ENCODE measurements at regions of chr7 and their contacts with region 1.

Region 1: DNA sequence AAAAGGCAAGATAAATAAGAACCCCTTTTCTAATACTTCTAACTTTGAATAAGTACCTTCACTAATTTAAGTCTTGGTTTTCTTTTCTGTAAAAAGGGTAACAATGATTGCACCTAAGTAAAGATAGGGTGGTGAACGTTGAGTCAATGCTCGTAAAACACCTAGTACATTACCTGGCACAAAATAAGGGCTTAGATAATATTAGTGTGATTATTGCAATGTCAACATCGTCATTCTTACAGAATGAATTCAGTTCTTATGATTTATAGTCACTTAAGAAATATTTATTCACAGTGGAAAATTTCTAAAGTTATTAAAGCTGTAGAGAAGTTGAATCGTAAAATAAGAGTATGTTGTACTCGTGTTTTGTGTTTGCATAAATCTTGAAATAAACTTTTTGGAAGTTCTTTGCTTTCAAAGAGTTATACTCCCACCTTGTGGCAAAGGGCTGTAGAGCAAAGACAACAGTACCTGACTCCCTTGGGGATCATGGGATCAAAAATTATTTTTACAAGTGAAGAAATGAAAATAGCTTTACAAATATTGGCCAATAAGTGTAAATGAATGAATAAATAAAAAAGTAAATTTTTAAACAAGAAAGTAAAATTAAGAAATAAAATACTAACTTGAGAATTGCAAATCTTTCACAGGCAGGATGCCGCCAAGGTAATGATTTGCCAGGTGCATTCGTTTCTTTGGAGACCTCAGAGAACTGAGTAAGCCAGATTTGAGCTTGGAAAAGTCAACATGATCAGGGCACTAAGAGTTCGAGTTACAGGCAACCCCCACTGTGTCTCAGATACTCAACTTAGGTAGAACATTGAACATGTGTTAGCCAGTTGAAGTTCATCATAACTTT is 285.8 kb upstream of the CACNA2D1 start:
- DNase-seq: peak in 1 of 2 experiments; percentile 40
- H3K4me3 ChIP-seq: no peak overlapping the region
- H3K4me3 Mint-ChIP-seq: no peak overlapping the region
- H3K27ac Mint-ChIP-seq: no peak overlapping the region
- H3K4me1 ChIP-seq: no peaks in the 10 kb centered on the region
- H3K4me1 Mint-ChIP-seq: no peaks in the 10 kb centered on the region
- H3K27me3 ChIP-seq: no peaks in the 10 kb centered on the region
- H3K27me3 Mint-ChIP-seq: no peaks in the 10 kb centered on the region
- CTCF ChIP-seq: peak; percentile 70 to 77

Region 2: DNA sequence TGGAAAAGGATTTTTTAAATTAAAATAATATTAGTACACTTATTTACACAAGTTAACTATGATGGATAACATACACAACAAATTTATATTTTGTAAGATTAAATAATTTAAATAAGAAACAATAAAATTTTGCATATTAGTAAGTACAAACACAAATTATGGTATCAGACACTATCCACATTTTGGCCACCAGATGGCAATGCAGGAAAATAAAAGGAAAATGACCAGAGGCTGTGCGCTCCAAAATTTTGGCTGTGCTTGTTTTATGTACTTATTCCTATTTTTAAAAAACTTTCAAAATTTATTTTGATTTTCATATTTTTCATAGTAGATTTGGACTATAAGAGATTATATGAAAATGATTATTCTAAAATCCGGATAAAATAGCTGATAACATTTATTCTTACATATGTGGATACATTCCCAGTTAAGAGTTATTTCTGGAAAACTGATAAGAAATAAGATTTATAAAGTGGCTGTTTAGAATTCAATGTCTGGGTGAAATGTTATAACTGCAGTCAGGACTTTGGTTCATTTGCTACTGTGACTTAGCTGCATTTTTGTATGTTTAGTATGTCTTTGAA is 684.8 kb before region 1 on chr7:
- CTCF ChIA-PET with region 1: no interaction called
- POLR2A ChIA-PET with region 1: no interaction called
- intact Hi-C with region 1: loop called (anchors 1 kb)
- DNase-seq: peak in 1 of 2 experiments; percentile 42
- H3K4me3 ChIP-seq: no peak overlapping the region
- H3K4me3 Mint-ChIP-seq: no peak overlapping the region
- H3K27ac Mint-ChIP-seq: no peak overlapping the region
- H3K4me1 ChIP-seq: peaks cover 4% of the 10 kb centered on the region
- H3K4me1 Mint-ChIP-seq: peaks cover 6% of the 10 kb centered on the region
- H3K27me3 ChIP-seq: no peaks in the 10 kb centered on the region
- H3K27me3 Mint-ChIP-seq: peaks cover 9% of the 10 kb centered on the region
- CTCF ChIP-seq: peak; percentile 45 to 74

Region 3: GRCh38 chr7:82172017-82172416 is 557.4 kb before region 1 on chr7:
- CTCF ChIA-PET with region 1: no interaction called
- POLR2A ChIA-PET with region 1: no interaction called
- intact Hi-C with region 1: loop called (anchors 5 kb)
- DNase-seq: no peak
- H3K4me3 ChIP-seq: no peak overlapping the region
- H3K4me3 Mint-ChIP-seq: no peak overlapping the region
- H3K27ac Mint-ChIP-seq: no peak overlapping the region
- H3K4me1 ChIP-seq: no peaks in the 10 kb centered on the region
- H3K4me1 Mint-ChIP-seq: no peaks in the 10 kb centered on the region
- H3K27me3 ChIP-seq: no peaks in the 10 kb centered on the region
- H3K27me3 Mint-ChIP-seq: no peaks in the 10 kb centered on the region
- CTCF ChIP-seq: no peak

Region 4: GRCh38 chr7:82481499-82482097 is 247.8 kb before region 1 on chr7:
- CTCF ChIA-PET with region 1: no interaction called
- POLR2A ChIA-PET with region 1: no interaction called
- intact Hi-C with region 1: loop called (anchors 5 kb)
- DNase-seq: no peak
- H3K4me3 ChIP-seq: no peak overlapping the region
- H3K4me3 Mint-ChIP-seq: no peak overlapping the region
- H3K27ac Mint-ChIP-seq: no peak overlapping the region
- H3K4me1 ChIP-seq: no peaks in the 10 kb centered on the region
- H3K4me1 Mint-ChIP-seq: no peaks in the 10 kb centered on the region
- H3K27me3 ChIP-seq: no peaks in the 10 kb centered on the region
- H3K27me3 Mint-ChIP-seq: peaks cover 2% of the 10 kb centered on the region
- CTCF ChIP-seq: peak; percentile 63 to 81

Region 5: DNA sequence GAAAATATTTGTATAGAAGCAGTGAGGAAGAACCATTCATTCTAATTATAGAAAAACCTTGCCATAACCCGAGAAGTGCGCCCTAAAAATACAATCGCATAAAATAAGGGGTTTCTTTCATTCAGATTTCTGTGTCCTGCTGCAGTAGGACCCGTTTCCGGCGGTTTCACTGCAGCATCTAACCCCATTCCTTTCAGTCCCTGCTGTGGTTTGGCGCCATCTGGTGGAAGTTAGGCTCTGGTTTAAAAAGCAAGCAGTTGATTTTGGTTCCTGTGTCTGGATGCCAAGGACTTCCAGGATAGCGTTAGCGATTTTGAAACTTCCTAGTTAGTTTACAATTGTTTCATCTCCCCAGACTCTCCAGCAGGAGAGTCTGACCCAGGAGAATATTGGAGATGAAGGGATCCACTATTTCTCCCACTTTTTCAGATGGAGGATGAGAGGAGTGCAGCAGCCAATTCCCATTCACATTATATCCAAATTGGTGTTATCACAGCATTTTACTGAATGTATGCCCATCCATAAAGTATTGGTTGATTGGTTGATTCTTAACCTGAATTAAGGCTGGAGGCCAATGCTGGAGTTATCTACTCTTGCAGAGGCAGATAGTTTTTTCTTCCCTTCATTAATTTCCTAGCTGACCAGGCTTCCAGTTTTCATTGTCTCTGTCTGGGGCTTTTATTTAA is 157.1 kb before region 1 on chr7:
- CTCF ChIA-PET with region 1: no interaction called
- POLR2A ChIA-PET with region 1: no interaction called
- intact Hi-C with region 1: loop called (anchors 1 kb)
- DNase-seq: peak; percentile 80 to 83
- H3K4me3 ChIP-seq: no peak overlapping the region
- H3K4me3 Mint-ChIP-seq: no peak overlapping the region
- H3K27ac Mint-ChIP-seq: no peak overlapping the region
- H3K4me1 ChIP-seq: no peaks in the 10 kb centered on the region
- H3K4me1 Mint-ChIP-seq: no peaks in the 10 kb centered on the region
- H3K27me3 ChIP-seq: no peaks in the 10 kb centered on the region
- H3K27me3 Mint-ChIP-seq: peaks cover 17% of the 10 kb centered on the region
- CTCF ChIP-seq: peak; percentile 85 to 91

Region 6: DNA sequence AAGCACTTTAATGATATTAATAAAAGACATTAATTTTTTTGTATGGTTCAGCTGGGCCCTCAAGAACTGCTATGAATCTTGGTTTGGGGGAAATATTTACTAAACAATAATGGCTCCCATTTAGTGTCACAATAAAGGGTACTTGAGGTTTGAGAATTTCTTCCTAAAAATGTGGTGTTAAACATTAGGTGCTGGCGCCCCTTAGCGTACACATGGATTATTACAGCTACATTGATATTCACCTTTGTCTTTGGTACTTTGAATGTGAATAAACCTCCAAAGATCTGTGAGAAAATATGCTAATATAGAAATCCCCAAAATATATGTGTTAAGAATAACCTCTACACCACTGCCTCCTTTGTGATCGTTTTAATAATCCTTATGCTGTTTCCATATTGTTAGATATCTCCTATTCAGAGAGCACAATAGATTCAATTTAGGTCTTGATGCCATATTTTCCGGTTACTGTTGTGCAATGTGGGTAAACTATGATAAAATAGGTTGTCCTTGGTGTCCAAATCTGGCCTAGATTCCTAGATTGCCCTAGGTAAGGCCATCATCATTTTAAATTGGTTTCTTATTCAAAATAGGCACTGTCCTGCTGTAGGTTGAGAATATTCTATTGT is 124.0 kb before region 1 on chr7:
- CTCF ChIA-PET with region 1: no interaction called
- POLR2A ChIA-PET with region 1: no interaction called
- intact Hi-C with region 1: loop called (anchors 1 kb)
- DNase-seq: peak in 1 of 2 experiments; percentile 10
- H3K4me3 ChIP-seq: no peak overlapping the region
- H3K4me3 Mint-ChIP-seq: no peak overlapping the region
- H3K27ac Mint-ChIP-seq: no peak overlapping the region
- H3K4me1 ChIP-seq: no peaks in the 10 kb centered on the region
- H3K4me1 Mint-ChIP-seq: no peaks in the 10 kb centered on the region
- H3K27me3 ChIP-seq: no peaks in the 10 kb centered on the region
- H3K27me3 Mint-ChIP-seq: no peaks in the 10 kb centered on the region
- CTCF ChIP-seq: peak; percentile 53 to 63

Measured in Caco-2 (cell line).